ENCODE measurements at regions of chr22 and their contacts with region 1.

Region 1: DNA sequence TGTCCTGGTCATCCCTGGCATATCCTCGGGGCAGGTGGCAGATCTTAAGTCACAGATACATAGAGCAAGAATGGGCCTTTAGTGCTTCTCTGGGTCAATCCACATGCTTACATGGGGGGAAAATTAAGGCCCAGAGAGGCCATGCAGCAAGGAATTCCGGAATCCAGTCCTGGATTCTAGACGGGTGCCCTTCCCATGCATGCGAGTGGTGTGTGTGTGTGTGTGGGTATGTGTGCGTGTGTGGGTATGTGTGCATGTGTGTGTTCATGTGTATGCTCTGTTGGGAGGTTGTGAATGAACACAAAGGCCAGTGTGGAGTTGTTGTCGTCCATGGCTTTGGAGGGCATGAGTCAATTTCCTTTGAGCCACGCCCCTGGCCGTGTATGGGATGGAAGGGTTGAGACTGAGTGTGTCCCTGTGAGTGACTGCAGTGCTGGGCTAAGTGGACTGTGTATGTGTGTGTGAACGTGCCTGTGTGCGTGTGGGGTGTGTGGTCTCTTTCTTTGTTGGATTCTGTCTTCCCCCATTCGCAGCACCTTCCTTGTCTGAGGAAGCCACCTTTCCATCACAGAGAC is 33.4 kb upstream of the EIF3D start:
- DNase-seq: peak in 1 of 2 experiments; percentile 27
- H3K4me3 ChIP-seq: no peak overlapping the region
- H3K27ac ChIP-seq: no peak overlapping the region
- H3K4me1 ChIP-seq: peaks cover 22% of the 10 kb centered on the region
- H3K27me3 ChIP-seq: peaks cover 2% of the 10 kb centered on the region; the same call in 1 of the 2 replicates
- CTCF ChIP-seq: no peak

Region 2: DNA sequence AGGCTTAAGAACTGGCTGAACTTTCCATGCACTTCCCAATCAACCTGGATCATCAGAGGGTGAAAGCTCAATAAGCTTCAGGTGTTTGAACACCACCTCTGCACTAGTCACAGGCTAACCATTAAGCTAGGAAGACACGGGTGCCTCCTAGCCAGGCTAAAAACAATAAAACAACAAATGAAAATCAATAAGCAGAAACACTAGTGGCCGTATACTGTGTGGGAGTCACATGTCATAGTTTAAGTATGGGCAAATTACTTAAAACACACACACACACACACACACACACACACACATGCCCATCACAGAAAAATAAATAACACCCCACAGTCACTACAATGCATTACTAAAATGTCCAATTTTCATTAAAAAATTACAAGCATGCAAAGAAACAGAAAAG is 759.5 kb before region 1 on chr22:
- CTCF ChIA-PET with region 1: no interaction called
- POLR2A ChIA-PET with region 1: interaction called, 17 read pairs
- intact Hi-C with region 1: no loop called
- DNase-seq: no peak
- H3K4me3 ChIP-seq: no peak overlapping the region
- H3K27ac ChIP-seq: no peak overlapping the region
- H3K4me1 ChIP-seq: peaks cover 16% of the 10 kb centered on the region
- H3K27me3 ChIP-seq: no peaks in the 10 kb centered on the region
- CTCF ChIP-seq: no peak

Region 3: DNA sequence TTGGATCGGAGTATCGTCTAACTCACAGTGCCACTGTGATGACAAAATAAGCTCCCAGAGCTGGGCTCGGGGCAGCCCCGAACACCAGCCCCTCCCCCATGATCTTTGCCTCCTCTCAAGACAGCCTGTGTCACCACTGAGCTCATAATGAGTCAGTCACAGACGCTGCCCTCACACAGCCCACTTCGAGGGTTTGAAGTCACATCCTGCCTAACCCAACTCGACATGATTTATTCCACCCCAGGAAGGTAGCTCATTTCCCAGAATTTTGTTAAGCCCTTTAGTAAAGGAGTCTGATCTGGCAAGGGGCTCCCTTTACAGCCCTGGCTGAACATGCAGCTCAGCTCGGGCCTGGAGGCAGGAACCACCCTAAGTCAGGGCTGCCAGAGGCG is 197.3 kb before region 1 on chr22:
- CTCF ChIA-PET with region 1: no interaction called
- POLR2A ChIA-PET with region 1: no interaction called
- intact Hi-C with region 1: no loop called
- DNase-seq: peak; percentile 74 to 87
- H3K4me3 ChIP-seq: no peak overlapping the region
- H3K27ac ChIP-seq: peak overlapping the region; percentile 53
- H3K4me1 ChIP-seq: peaks cover 99% of the 10 kb centered on the region
- H3K27me3 ChIP-seq: no peaks in the 10 kb centered on the region
- CTCF ChIP-seq: no peak

Region 4: DNA sequence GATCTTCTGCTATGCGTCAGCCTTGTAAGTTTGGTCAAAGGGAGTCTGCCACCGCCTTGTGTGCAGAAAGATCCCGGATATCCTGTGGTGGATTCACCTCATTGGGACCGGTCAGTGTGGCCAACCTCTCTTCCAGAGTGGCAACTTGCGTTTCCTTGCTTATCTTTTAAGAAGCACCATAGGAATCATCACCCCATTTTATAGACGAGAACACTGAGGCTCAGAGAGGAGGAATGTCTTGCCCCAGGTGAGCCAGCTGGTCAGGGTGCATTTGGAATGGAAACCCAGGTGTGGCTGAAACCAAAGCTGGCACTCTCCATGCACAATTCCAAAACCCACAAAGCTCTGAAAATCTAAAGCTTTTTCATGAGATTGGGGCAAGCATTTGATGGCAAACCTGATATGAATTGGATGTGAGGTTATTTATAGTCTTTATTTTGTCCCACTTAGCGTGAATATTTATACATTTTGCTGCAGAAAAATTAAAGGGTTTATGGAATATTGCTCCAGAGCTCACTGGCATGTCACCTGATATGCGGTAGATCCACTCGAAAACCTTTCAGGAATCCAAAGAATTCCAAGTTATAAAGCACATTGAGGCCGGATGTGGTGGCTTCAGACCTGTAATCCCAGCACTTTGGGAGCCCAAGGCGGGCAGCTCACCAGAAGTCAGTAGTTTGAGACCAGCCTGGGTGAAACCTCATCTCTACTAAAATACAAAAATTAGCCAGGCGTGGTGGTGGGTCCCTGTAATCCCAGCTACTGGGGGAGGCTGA is 21.3 kb before region 1 on chr22:
- CTCF ChIA-PET with region 1: no interaction called
- POLR2A ChIA-PET with region 1: no interaction called
- intact Hi-C with region 1: no loop called
- DNase-seq: peak; percentile 57 to 75
- H3K4me3 ChIP-seq: no peak overlapping the region
- H3K27ac ChIP-seq: peak overlapping the region; percentile 88
- H3K4me1 ChIP-seq: peaks cover 23% of the 10 kb centered on the region
- H3K27me3 ChIP-seq: no peaks in the 10 kb centered on the region
- CTCF ChIP-seq: no peak

Region 5: GRCh38 chr22:36585841-36586240 is 23.5 kb after region 1 on chr22:
- CTCF ChIA-PET with region 1: no interaction called
- POLR2A ChIA-PET with region 1: no interaction called
- intact Hi-C with region 1: no loop called
- DNase-seq: peak; percentile 76 to 81
- H3K4me3 ChIP-seq: no peak overlapping the region
- H3K27ac ChIP-seq: peak overlapping the region; percentile 16
- H3K4me1 ChIP-seq: peaks cover 19% of the 10 kb centered on the region
- H3K27me3 ChIP-seq: peaks cover 20% of the 10 kb centered on the region
- CTCF ChIP-seq: no peak

Region 6: DNA sequence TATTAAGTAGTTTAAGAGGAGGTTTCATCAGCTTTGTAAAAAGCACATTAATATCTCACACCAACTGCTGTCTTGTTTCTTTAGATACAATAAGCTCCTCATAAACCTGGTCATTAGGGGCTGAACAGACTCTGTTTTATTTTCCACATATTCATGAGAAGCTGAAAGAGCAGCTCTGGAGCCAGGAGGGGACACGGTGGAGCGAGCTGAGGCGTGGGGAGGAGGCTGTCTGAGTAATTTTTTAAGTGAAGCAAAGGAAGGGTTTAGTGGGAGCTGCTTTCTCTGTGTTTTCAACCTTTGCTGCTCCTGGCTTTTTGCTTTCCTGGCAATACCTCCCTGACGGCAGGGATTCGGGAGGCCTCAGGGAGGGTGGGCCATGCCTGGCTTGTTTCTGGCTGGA is 33.6 kb after region 1 on chr22:
- CTCF ChIA-PET with region 1: interaction called, 10 read pairs
- POLR2A ChIA-PET with region 1: no interaction called
- intact Hi-C with region 1: no loop called
- DNase-seq: no peak
- H3K4me3 ChIP-seq: no peak overlapping the region
- H3K27ac ChIP-seq: no peak overlapping the region
- H3K4me1 ChIP-seq: no peaks in the 10 kb centered on the region
- H3K27me3 ChIP-seq: peaks cover 95% of the 10 kb centered on the region
- CTCF ChIP-seq: no peak

Region 7: GRCh38 chr22:36659762-36660509 is 97.6 kb after region 1 on chr22:
- CTCF ChIA-PET with region 1: no interaction called
- POLR2A ChIA-PET with region 1: no interaction called
- intact Hi-C with region 1: loop called (anchors 1 kb)
- DNase-seq: peak; percentile 98 to 99
- H3K4me3 ChIP-seq: peak overlapping the region; percentile 48
- H3K27ac ChIP-seq: peak overlapping the region; percentile 79
- H3K4me1 ChIP-seq: peaks cover 28% of the 10 kb centered on the region
- H3K27me3 ChIP-seq: no peaks in the 10 kb centered on the region
- CTCF ChIP-seq: no peak

Region 8: DNA sequence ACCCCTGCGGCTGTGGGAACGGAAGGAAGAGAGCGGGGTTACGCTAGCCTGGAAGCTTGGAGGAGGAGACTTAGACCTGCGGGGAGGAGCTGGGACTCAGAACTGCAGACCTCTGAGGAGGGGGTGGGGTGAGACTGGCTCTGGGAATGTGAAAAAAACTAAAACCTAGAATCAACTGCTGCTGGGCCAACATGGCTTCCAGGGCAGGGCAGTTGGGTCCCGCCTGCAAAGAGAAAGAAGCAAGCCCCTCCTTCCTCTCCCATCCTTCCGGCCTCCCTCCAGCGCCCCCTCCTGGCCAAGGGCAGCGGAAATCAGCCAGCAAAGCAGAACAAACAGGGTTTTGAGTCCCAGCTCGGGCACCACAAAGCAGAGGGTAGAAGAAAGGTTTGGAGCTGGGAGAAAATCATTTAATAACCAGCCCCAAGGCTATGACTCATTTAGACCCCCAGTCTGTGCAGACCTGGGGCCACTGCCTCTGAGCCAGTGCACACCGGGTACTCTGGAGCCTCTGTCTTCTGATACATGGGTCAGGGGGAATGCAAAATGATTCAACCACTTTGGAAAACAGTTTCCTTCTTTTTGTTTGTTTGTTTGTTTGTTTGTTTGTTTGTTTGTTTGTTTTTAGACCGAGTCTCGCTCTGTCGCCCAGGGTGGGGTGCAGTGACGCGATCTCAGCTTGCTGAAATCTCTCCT is 291.2 kb after region 1 on chr22:
- CTCF ChIA-PET with region 1: no interaction called
- POLR2A ChIA-PET with region 1: no interaction called
- intact Hi-C with region 1: no loop called
- DNase-seq: peak; percentile 57 to 66
- H3K4me3 ChIP-seq: no peak overlapping the region
- H3K27ac ChIP-seq: no peak overlapping the region
- H3K4me1 ChIP-seq: no peaks in the 10 kb centered on the region; the same call in 1 of the 2 replicates
- H3K27me3 ChIP-seq: no peaks in the 10 kb centered on the region
- CTCF ChIP-seq: peak; percentile 93

Region 9: GRCh38 chr22:37063431-37064420 is 501.4 kb after region 1 on chr22:
- CTCF ChIA-PET with region 1: interaction called, 16 read pairs
- POLR2A ChIA-PET with region 1: no interaction called
- intact Hi-C with region 1: no loop called
- DNase-seq: peak; percentile 55 to 66
- H3K4me3 ChIP-seq: no peak overlapping the region
- H3K27ac ChIP-seq: no peak overlapping the region
- H3K4me1 ChIP-seq: peaks cover 31% of the 10 kb centered on the region
- H3K27me3 ChIP-seq: no peaks in the 10 kb centered on the region
- CTCF ChIP-seq: no peak